Breast epithelium (tissue), 4 donors: ENCODE measurements at regions of chr11 and their contacts with region 1.

Region 1: DNA sequence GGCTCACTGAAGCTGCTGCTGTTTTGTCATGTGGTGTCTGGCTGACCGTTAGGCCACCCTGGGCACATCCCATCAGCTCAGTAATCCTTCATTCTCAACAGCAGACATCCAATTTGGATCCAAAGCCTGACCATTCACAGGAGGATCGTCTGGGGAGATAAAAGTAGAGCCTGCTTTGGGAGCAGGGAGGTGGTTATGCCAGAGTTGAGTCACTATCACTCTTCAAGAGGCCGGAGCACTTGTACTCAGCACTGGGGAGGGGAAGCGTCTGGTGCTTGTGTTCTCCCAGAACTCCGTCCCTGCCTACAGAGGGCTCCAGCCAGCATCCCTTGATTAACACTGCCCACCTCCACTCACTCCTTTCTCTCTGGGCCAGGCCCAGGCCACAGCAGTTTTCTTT is 382.6 kb downstream of the OPCML start:
- DNase-seq: no peak
- H3K4me3 ChIP-seq: no peak overlapping the region
- H3K27ac ChIP-seq: no peak overlapping the region
- H3K4me1 ChIP-seq: no peaks in the 10 kb centered on the region
- H3K27me3 ChIP-seq: peaks cover 0 to 15% of the 10 kb centered on the region in 2 donors
- CTCF ChIP-seq: no peak
- POLR2A ChIP-seq: no peak

Region 2: GRCh38 chr11:131829725-131830124 is 1320.0 kb before region 1 on chr11:
- intact Hi-C with region 1: loop called (anchors 5 kb)
- DNase-seq: no peak
- H3K4me3 ChIP-seq: no peak overlapping the region
- H3K27ac ChIP-seq: no peak overlapping the region
- H3K4me1 ChIP-seq: no peaks in the 10 kb centered on the region
- H3K27me3 ChIP-seq: no peaks in the 10 kb centered on the region
- CTCF ChIP-seq: no peak
- POLR2A ChIP-seq: no peak

Region 3: GRCh38 chr11:133207995-133208394 is 58.3 kb after region 1 on chr11:
- intact Hi-C with region 1: no loop called
- DNase-seq: no peak
- H3K4me3 ChIP-seq: no peak overlapping the region
- H3K27ac ChIP-seq: no peak overlapping the region
- H3K4me1 ChIP-seq: no peaks in the 10 kb centered on the region
- H3K27me3 ChIP-seq: no peaks in the 10 kb centered on the region
- CTCF ChIP-seq: no peak
- POLR2A ChIP-seq: no peak

Region 4: DNA sequence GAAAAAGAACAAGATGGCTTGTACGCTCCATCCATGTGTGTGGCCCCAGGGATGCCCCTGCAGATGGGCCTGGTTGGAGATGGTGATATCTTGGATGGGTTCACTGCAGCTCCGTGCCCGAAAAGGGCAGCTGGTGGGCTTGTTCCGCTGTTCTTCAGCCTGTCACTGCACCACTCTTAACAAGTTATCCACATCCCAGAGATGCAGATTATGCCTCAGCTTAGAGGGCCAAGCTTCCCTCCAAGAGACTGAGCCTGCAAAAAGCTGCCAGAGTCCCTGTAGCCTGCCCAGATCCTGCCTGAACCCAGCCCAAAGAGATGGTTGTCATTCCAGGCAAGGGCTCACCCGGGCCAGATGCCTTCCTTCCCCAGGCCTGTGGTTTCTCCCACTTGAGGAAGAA is 74.6 kb after region 1 on chr11:
- intact Hi-C with region 1: loop called (anchors 2 kb)
- DNase-seq: peak in 1 of 2 donors; percentile 45
- H3K4me3 ChIP-seq: no peak overlapping the region
- H3K27ac ChIP-seq: no peak overlapping the region
- H3K4me1 ChIP-seq: no peaks in the 10 kb centered on the region
- H3K27me3 ChIP-seq: peaks cover 0 to 4% of the 10 kb centered on the region in 2 donors
- CTCF ChIP-seq: no peak
- POLR2A ChIP-seq: no peak

Region 5: GRCh38 chr11:134244655-134245054 is 1095.0 kb after region 1 on chr11:
- intact Hi-C with region 1: no loop called
- DNase-seq: no peak
- H3K4me3 ChIP-seq: no peak overlapping the region
- H3K27ac ChIP-seq: no peak overlapping the region
- H3K4me1 ChIP-seq: no peaks in the 10 kb centered on the region
- H3K27me3 ChIP-seq: no peaks in the 10 kb centered on the region
- CTCF ChIP-seq: peak in 1 of 3 donors; percentile 26
- POLR2A ChIP-seq: no peak